CD8-positive, alpha-beta T cell (primary cell): ENCODE measurements at regions of chr11 and their contacts with region 1.

Region 1: DNA sequence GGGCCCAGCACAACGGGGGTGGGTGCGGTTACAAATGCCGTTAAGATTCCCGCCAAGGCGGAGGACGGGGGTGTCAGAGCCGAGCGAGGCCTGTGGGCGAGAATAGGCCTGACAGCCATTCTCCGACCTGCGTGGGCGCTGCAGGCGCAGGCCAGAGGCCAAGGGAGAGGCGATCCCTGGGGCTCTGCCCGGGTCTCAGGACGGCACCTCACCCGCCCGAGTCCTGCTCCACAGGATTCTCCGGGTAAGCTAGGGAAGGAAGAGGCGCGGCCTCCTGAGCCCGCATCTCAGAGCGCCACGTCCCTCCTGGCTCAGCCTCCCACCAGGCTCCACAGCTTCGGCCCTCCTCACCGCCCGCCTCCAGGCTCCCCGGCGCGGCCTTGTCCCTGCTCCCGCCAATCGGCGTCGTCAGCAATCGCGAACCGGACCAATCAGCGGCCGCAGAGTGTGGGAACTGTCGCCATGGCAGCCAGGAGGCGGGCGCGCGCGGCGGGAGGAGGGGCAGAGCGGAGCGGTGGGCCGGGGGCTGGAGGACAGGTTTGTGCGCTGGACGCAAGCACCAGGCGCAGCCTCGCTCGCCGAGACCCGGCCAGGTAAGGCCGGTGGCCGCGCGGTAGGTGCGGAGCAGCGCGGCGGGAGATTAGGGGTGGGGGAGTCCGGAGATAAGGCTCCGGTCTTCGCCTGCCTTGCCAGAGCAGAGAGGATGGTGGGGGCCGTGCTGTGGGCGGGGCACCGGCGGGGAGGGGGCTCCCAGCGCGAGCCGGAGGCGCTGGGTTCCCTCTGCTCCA is at the start of gene NUCB2:
- DNase-seq: peak; percentile 89 to 98 (median 96)
- ATAC-seq: peak; percentile 90
- H3K4me3 ChIP-seq: peak within 1 kb of the TSS; percentile 77 to 83
- H3K4me3 Mint-ChIP-seq: peak within 1 kb of the TSS; percentile 84
- H3K27ac ChIP-seq: peak within 1 kb of the TSS; percentile 79 to 86
- H3K27ac Mint-ChIP-seq: peak within 1 kb of the TSS; percentile 91
- H3K4me1 ChIP-seq: peaks cover 37% of the 10 kb centered on the region
- H3K4me1 Mint-ChIP-seq: peaks cover 39% of the 10 kb centered on the region
- H3K27me3 ChIP-seq: no peaks in the 10 kb centered on the region
- H3K27me3 Mint-ChIP-seq: no peaks in the 10 kb centered on the region
- CTCF ChIP-seq: no peak
- total RNA-seq, gene NUCB2: 105 TPM

Region 2: GRCh38 chr11:16738193-16738946 is 538.1 kb before region 1 on chr11 and contains the start of gene C11orf58:
- CTCF ChIA-PET with region 1: no interaction called
- POLR2A ChIA-PET with region 1: no interaction called
- intact Hi-C with region 1: loop called (anchors 2 to 5 kb)
- DNase-seq: peak; percentile 85 to 98 (median 96)
- ATAC-seq: peak; percentile 95
- H3K4me3 ChIP-seq: peak within 1 kb of the TSS; percentile 93 to 95
- H3K4me3 Mint-ChIP-seq: peak within 1 kb of the TSS; percentile 63
- H3K27ac ChIP-seq: peak within 1 kb of the TSS; percentile 99 to 100
- H3K27ac Mint-ChIP-seq: no peak within 1 kb of the TSS
- H3K4me1 ChIP-seq: peaks cover 35% of the 10 kb centered on the region
- H3K4me1 Mint-ChIP-seq: peaks cover 25% of the 10 kb centered on the region
- H3K27me3 ChIP-seq: no peaks in the 10 kb centered on the region
- H3K27me3 Mint-ChIP-seq: no peaks in the 10 kb centered on the region
- CTCF ChIP-seq: no peak
- total RNA-seq, gene C11orf58: 148 to 157 TPM

Region 3: DNA sequence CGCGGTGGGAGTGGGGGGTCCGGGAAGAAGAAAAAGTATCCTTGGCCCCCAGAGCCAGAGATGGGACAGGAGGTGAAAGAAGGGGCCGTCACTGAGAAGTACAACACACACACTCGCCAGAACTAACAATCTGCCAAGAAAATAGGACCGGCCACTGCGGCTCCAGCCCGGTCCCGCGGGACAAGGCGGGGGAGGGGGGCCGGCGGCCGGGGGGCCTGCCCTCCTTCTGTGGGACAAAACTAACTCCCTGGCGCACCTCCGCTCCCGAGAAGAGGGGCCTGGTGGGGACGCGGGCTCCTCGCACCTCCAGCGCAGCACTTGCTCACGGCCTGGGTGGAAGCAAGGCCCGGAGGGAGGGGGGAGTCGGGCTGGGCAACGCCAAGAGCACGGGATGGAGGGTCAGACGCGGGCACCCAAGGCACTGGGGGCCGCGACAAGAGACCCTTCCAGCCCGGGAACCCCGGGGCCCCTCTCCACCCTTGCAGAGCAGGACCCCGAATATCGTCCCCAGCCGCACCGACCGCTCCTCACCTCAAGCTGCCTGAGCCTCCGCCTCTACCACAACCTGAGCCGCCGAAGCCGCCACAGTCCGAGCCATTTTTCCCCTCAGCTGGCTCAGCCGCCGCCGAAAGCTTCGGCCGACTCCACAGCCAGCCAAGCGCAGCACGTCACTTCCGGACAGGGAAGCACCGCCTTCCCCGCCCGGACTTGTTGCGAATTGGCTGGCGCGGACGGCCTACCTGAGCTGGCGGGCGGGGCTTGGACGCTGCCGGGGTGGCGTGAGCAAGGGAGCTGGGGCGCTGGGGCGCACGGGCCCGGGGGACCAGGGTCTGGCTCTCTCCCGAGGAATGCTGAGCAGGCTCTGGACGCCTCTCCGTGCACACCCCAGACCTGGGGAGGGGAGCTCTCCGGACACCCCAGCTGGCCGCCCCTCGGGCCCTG is 68.8 kb before region 1 on chr11 and contains the start of gene PIK3C2A:
- CTCF ChIA-PET with region 1: no interaction called
- POLR2A ChIA-PET with region 1: interaction called, 16 read pairs
- intact Hi-C with region 1: loop called (anchors 1 to 2 kb)
- DNase-seq: peak; percentile 87 to 96 (median 94)
- ATAC-seq: peak; percentile 96
- H3K4me3 ChIP-seq: peak within 1 kb of the TSS; percentile 80 to 86
- H3K4me3 Mint-ChIP-seq: peak within 1 kb of the TSS; percentile 99
- H3K27ac ChIP-seq: peak within 1 kb of the TSS; percentile 76 to 88
- H3K27ac Mint-ChIP-seq: peak within 1 kb of the TSS; percentile 99
- H3K4me1 ChIP-seq: peaks cover 26% of the 10 kb centered on the region
- H3K4me1 Mint-ChIP-seq: peaks cover 47% of the 10 kb centered on the region
- H3K27me3 ChIP-seq: no peaks in the 10 kb centered on the region
- H3K27me3 Mint-ChIP-seq: no peaks in the 10 kb centered on the region
- CTCF ChIP-seq: no peak
- total RNA-seq, gene PIK3C2A: 50.8 to 54.3 TPM

Region 4: GRCh38 chr11:17287058-17287457 is 10.6 kb after region 1 on chr11:
- CTCF ChIA-PET with region 1: interaction called, 6 read pairs
- POLR2A ChIA-PET with region 1: interaction called, 35 read pairs
- intact Hi-C with region 1: loop called in 1 of 2 experiments (anchors 1 kb)
- DNase-seq: peak in 3 of 9 experiments; percentile 40 to 72 (median 45)
- ATAC-seq: peak; percentile 19
- H3K4me3 ChIP-seq: no peak overlapping the region
- H3K4me3 Mint-ChIP-seq: peak overlapping the region; percentile 47
- H3K27ac ChIP-seq: peak overlapping the region; percentile 26 to 64
- H3K27ac Mint-ChIP-seq: peak overlapping the region; percentile 94
- H3K4me1 ChIP-seq: peaks cover 56% of the 10 kb centered on the region
- H3K4me1 Mint-ChIP-seq: peaks cover 65% of the 10 kb centered on the region
- H3K27me3 ChIP-seq: no peaks in the 10 kb centered on the region
- H3K27me3 Mint-ChIP-seq: no peaks in the 10 kb centered on the region
- CTCF ChIP-seq: no peak

Region 5: DNA sequence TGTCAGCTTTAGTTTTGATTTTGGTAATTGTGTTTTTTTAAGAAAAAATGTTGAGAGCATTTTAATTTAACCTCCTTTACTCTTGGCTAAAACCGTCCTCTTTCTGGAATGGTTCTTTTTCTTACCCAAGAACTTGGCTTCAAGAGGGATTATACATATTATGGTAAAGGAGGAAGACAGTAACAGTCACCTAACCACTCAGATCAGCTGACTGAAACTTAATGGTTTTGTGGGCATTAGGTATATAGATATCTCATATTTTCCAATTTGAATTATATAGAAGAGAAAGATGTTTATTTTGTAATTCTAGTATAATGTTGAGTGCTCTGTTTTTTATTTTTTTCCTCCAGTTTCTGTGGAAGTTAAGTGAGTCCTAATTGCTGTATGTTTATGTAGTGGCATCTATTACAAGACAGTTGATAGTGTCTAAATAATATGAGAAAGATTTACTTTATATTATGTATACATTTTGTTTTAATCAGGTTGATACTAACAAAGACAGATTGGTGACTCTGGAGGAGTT is 38.5 kb after region 1 on chr11:
- CTCF ChIA-PET with region 1: no interaction called
- POLR2A ChIA-PET with region 1: no interaction called
- intact Hi-C with region 1: loop called in 1 of 2 experiments (anchors 5 kb)
- DNase-seq: no peak
- ATAC-seq: no peak
- H3K4me3 ChIP-seq: no peak overlapping the region
- H3K4me3 Mint-ChIP-seq: no peak overlapping the region
- H3K27ac ChIP-seq: no peak overlapping the region
- H3K27ac Mint-ChIP-seq: no peak overlapping the region
- H3K4me1 ChIP-seq: no peaks in the 10 kb centered on the region
- H3K4me1 Mint-ChIP-seq: peaks cover 3% of the 10 kb centered on the region
- H3K27me3 ChIP-seq: no peaks in the 10 kb centered on the region
- H3K27me3 Mint-ChIP-seq: no peaks in the 10 kb centered on the region
- CTCF ChIP-seq: no peak

Region 6: DNA sequence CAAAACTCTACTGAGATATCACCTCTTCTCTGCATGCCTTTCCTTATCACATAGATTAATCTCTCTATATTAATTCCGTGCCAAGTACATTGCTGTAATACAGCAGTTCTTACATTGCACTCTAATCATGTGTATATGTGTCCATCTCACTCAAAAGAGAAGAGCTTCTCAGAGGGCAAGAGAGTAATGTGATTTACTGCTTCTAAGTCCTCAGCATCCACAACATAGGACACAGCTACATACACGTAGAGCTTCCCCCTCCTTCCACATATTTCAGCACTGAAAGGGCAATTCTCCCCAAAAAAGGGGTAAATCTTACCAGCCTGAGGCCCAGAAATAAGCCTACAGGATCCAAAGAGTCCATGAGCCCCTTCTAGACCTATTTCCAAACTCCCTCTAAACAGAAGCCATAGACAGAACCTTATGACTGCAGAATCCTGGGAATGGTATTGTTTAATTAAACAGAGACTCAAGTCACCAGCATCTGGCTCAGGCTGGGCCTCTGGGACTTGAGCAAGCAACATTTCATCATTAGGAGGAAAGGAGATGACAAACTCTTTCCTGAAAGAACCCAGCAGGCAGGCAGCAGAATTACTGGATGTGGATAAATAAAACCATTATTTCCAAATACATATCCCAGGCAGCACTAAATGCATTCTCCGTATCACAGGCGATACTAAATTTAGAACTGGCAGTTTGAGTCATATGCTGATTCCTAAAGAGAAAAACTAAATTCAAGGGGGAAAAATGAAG is 545.4 kb after region 1 on chr11:
- CTCF ChIA-PET with region 1: no interaction called
- POLR2A ChIA-PET with region 1: no interaction called
- intact Hi-C with region 1: no loop called
- DNase-seq: no peak
- ATAC-seq: no peak
- H3K4me3 ChIP-seq: no peak overlapping the region
- H3K4me3 Mint-ChIP-seq: no peak overlapping the region
- H3K27ac ChIP-seq: no peak overlapping the region
- H3K27ac Mint-ChIP-seq: no peak overlapping the region
- H3K4me1 ChIP-seq: no peaks in the 10 kb centered on the region
- H3K4me1 Mint-ChIP-seq: no peaks in the 10 kb centered on the region
- H3K27me3 ChIP-seq: no peaks in the 10 kb centered on the region
- H3K27me3 Mint-ChIP-seq: no peaks in the 10 kb centered on the region
- CTCF ChIP-seq: no peak